ENCODE measurements at regions of chr6 and their contacts with region 1.

Region 1: GRCh38 chr6:10694302-10695085 is at the starts of genes C6orf52 and PAK1IP1:
- DNase-seq: peak; percentile 91 to 96
- ATAC-seq: peak; percentile 94 to 98 (median 94)
- H3K4me3 ChIP-seq: peak within 1 kb of the TSS; percentile 70
- H3K4me3 Mint-ChIP-seq: peak within 1 kb of the TSS; percentile 99
- H3K27ac ChIP-seq: peak within 1 kb of the TSS; percentile 94
- H3K27ac Mint-ChIP-seq: peak within 1 kb of the TSS; percentile 100
- H3K4me1 ChIP-seq: peaks cover 11% of the 10 kb centered on the region
- H3K4me1 Mint-ChIP-seq: peaks cover 25 to 26% of the 10 kb centered on the region in 2 donors
- H3K27me3 ChIP-seq: no peaks in the 10 kb centered on the region
- H3K27me3 Mint-ChIP-seq: no peaks in the 10 kb centered on the region
- CTCF ChIP-seq: no peak
- total RNA-seq, gene C6orf52: 0.58 to 0.91 TPM in 2 of 3 donors, not detected in the other
- total RNA-seq, gene PAK1IP1: 3.6 to 5.2 (median 4.6) TPM

Region 2: DNA sequence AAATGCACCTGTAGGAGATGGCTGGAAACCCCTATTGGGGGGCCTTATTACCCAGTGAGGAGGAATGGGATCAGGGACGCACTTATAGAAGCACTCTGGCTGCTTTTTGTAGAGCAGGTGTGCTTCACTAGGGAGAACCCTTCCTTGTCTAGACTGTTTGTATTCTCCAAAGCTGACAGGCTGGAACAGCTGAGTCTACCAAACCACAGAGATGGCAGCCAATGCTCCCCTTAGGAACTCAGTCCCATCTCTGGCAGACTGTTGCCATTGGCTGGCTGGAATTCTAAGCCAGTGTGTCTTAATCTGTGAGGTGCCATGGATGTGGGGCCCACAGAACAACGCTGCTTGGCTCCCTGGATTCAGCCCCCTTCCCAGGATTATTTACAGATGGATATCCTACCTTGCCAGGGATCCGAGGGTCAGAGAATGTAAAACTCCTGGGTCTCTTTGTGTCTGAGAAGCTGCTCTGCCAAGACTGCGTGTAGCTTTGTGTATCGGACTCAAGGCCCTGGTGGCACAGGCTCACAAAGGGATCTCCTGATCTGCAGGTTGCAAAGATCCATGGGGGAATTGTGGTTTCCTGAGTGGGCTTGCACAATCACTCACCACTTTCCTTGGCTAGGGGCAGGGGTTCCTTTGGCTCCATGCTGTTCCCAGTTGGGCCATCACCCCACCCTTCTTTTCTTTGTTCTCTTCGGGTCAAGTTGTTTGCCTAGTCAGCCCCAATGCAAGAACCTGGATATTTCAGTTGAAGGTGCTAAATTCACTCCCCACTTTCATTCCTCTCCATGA is 26.2 kb before region 1 on chr6:
- intact Hi-C with region 1: no loop called
- DNase-seq: no peak
- ATAC-seq: no peak
- H3K4me3 ChIP-seq: no peak overlapping the region
- H3K4me3 Mint-ChIP-seq: no peak overlapping the region
- H3K27ac ChIP-seq: no peak overlapping the region
- H3K27ac Mint-ChIP-seq: no peak overlapping the region
- H3K4me1 ChIP-seq: no peaks in the 10 kb centered on the region
- H3K4me1 Mint-ChIP-seq: no peaks in the 10 kb centered on the region
- H3K27me3 ChIP-seq: peaks cover 8% of the 10 kb centered on the region
- H3K27me3 Mint-ChIP-seq: peaks cover 13 to 33% of the 10 kb centered on the region in 2 donors
- CTCF ChIP-seq: no peak

Region 3: DNA sequence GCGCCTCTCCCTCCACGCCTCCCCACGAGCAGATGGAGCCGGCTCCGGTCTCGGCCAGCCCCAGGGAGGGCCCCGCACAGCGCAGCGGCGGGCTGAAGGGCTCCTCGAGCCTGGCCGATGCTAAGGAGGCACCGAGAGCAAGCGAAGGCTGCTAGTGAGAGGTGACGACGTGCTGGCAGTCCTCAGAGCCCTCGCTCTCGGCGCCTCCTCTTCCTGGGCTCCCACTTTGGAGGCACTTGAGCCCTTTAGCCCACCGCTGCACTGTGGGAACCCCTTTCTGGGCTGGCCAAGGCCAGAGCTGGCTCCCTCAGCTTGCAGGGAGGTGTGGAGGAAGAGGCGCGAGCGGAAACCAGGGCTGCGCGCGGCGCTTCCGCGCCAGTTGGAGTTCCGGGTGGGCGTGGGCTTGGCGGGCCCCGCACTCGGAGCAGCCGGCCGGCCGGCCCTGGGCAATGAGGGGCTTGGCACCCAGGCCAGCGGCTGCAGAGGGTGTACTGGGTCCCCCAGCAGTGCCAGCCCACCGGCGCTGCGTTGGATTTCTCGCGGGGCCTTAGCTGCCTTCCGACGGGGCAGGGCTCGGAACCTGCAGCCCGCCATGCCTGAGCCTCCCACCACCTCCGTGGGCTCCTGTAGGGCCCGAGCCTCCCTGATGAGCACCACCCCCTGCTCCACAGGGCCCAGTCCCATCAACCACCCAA is 25.9 kb after region 1 on chr6:
- intact Hi-C with region 1: loop called (anchors 2 kb)
- DNase-seq: peak; percentile 56 to 74
- ATAC-seq: peak; percentile 62 to 71 (median 64)
- H3K4me3 ChIP-seq: peak overlapping the region; percentile 49
- H3K4me3 Mint-ChIP-seq: peak overlapping the region; percentile 79
- H3K27ac ChIP-seq: peak overlapping the region; percentile 59
- H3K27ac Mint-ChIP-seq: peak overlapping the region in 1 of 2 donors; percentile 89
- H3K4me1 ChIP-seq: peaks cover 42% of the 10 kb centered on the region
- H3K4me1 Mint-ChIP-seq: peaks cover 31 to 49% of the 10 kb centered on the region in 2 donors
- H3K27me3 ChIP-seq: peaks cover 10% of the 10 kb centered on the region
- H3K27me3 Mint-ChIP-seq: peaks cover 18 to 19% of the 10 kb centered on the region in 2 donors
- CTCF ChIP-seq: no peak

Region 4: DNA sequence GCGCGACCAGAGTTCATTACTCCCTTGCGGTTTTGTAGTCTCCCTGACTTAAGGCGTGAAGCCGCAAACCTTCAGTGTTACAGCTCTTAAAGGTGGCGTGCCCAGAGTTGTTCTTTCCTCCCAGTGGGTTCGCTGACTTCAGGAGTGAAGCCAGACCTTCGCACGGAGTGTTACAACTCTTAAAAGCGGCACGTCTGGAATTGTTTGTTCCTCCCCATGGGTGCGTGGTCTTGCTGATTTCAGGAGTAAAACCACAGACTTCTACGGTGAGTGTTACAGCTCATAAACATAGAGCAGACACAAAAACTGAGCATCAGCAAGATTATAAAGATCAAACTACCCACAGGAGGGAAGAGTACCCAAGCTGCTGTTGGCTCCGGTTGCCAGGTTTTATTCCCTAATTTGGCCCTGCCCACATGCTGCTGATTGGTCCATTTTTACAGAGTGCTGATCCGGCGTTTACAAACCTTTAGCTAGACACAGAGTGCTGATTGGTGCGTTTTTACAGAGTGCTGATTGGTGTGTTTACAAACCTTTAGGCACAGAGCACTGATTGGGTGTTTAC is 38.7 kb after region 1 on chr6:
- intact Hi-C with region 1: loop called (anchors 2 kb)
- DNase-seq: peak; percentile 62 to 79
- ATAC-seq: peak; percentile 88 to 98 (median 91)
- H3K4me3 ChIP-seq: no peak overlapping the region
- H3K4me3 Mint-ChIP-seq: peak overlapping the region; percentile 67
- H3K27ac ChIP-seq: no peak overlapping the region
- H3K27ac Mint-ChIP-seq: peak overlapping the region; percentile 60 to 71
- H3K4me1 ChIP-seq: peaks cover 15% of the 10 kb centered on the region
- H3K4me1 Mint-ChIP-seq: peaks cover 17 to 19% of the 10 kb centered on the region in 2 donors
- H3K27me3 ChIP-seq: peaks cover 4% of the 10 kb centered on the region
- H3K27me3 Mint-ChIP-seq: peaks cover 24 to 41% of the 10 kb centered on the region in 2 donors
- CTCF ChIP-seq: no peak

Region 5: GRCh38 chr6:10747251-10747972 is 52.9 kb after region 1 on chr6 and contains the start of gene TMEM14B:
- intact Hi-C with region 1: loop called (anchors 1 kb)
- DNase-seq: peak; percentile 98 to 100
- ATAC-seq: peak; percentile 86 to 97 (median 92)
- H3K4me3 ChIP-seq: peak within 1 kb of the TSS; percentile 85
- H3K4me3 Mint-ChIP-seq: peak within 1 kb of the TSS; percentile 87
- H3K27ac ChIP-seq: peak within 1 kb of the TSS; percentile 69
- H3K27ac Mint-ChIP-seq: peak within 1 kb of the TSS; percentile 82 to 93
- H3K4me1 ChIP-seq: peaks cover 38% of the 10 kb centered on the region
- H3K4me1 Mint-ChIP-seq: peaks cover 43 to 48% of the 10 kb centered on the region in 2 donors
- H3K27me3 ChIP-seq: no peaks in the 10 kb centered on the region
- H3K27me3 Mint-ChIP-seq: peaks cover 9 to 11% of the 10 kb centered on the region in 2 donors
- CTCF ChIP-seq: no peak
- total RNA-seq, gene TMEM14B: 21.0 to 38.4 (median 30.8) TPM

Region 6: DNA sequence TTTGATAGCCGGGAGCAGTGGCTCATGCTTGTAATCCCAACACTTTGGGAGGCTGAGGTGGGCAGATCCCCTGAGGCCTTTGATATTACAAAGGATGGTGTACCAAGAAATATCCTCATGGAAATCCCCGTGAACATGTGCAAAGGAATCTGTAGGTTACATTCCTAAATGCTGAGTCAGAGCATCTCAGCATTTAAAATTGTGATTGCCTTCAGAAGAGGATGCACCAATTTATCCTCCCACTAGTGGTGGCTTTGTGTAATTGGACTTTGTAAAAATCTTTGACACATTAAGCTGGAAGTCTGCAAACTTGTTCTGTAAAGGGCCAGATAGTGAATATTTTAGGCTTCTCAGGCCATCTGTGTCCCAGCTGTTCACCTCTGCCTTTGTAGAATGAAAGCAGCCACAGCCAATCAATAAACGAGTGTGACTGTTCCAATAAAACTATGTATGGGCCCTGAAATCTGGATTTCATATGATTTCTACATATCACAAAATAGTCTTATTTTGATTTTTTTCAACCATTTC is 64.9 kb after region 1 on chr6:
- intact Hi-C with region 1: loop called (anchors 1 kb)
- DNase-seq: peak in 1 of 2 donors; percentile 59
- ATAC-seq: peak; percentile 55 to 82 (median 69)
- H3K4me3 ChIP-seq: no peak overlapping the region
- H3K4me3 Mint-ChIP-seq: no peak overlapping the region
- H3K27ac ChIP-seq: no peak overlapping the region
- H3K27ac Mint-ChIP-seq: no peak overlapping the region
- H3K4me1 ChIP-seq: no peaks in the 10 kb centered on the region
- H3K4me1 Mint-ChIP-seq: peaks cover 0 to 5% of the 10 kb centered on the region in 2 donors
- H3K27me3 ChIP-seq: no peaks in the 10 kb centered on the region
- H3K27me3 Mint-ChIP-seq: peaks cover 5 to 16% of the 10 kb centered on the region in 2 donors
- CTCF ChIP-seq: peak; percentile 63

Region 7: DNA sequence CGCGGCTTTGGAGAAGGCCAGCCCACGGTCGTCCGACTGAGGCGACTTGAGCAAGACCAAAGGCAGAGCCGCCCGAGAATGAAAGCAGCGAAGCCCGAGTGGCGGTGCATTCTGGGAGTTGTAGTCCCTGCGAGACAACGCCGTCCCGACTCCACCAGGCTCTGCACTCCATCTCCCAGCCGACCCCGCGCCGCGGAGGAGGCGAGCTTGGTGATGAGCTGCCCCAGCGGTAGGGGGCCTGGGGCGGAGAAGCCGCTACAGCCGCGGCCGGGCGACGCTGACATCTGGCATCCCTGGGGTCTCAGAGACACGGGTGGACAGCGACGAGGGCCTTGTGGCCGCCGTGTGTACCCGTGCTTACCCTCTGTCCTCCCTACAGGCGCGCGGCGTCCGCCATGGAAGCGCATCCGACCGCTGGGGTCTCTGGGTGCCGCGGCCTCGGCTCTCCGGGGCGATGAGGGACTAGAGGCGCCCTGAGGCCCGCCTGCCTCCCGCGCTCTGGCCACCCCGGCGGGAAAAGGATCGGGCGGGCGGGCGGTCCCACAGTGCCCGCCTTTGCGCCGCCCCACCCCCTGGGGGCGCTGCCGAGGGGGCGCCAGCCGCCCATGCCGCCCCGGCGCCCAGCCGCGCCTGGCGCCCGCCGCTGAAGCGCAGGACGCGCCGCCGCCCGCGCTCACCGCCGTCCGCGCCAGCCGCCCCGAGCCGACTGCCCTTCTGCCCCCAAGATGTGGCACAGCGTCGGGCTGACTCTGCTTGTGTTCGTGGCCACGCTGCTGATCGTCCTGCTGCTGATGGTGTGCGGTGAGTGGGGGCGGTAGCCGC is 399.3 kb after region 1 on chr6 and contains the start of gene SMIM13:
- intact Hi-C with region 1: loop called (anchors 1 kb)
- DNase-seq: peak; percentile 92 to 96
- ATAC-seq: peak; percentile 91 to 97 (median 91)
- H3K4me3 ChIP-seq: peak within 1 kb of the TSS; percentile 98
- H3K4me3 Mint-ChIP-seq: peak within 1 kb of the TSS; percentile 99
- H3K27ac ChIP-seq: peak within 1 kb of the TSS; percentile 99
- H3K27ac Mint-ChIP-seq: peak within 1 kb of the TSS; percentile 94 to 96
- H3K4me1 ChIP-seq: peaks cover 17% of the 10 kb centered on the region
- H3K4me1 Mint-ChIP-seq: peaks cover 22 to 29% of the 10 kb centered on the region in 2 donors
- H3K27me3 ChIP-seq: no peaks in the 10 kb centered on the region
- H3K27me3 Mint-ChIP-seq: peaks cover 0 to 4% of the 10 kb centered on the region in 2 donors
- CTCF ChIP-seq: peak; percentile 75
- total RNA-seq, gene SMIM13: 5.3 to 10.3 (median 9.8) TPM

Measured in natural killer cell (primary cell).